GM23248 (cell line): ENCODE measurements at regions of chr10 and their contacts with region 1.

Region 1: GRCh38 chr10:48363617-48364355 is 57.3 kb downstream of the MAPK8 start:
- DNase-seq: peak; percentile 81
- H3K4me3 ChIP-seq: peak overlapping the region; percentile 32
- H3K27ac ChIP-seq: peak overlapping the region; percentile 45
- H3K4me1 ChIP-seq: peaks cover 33% of the 10 kb centered on the region
- H3K27me3 ChIP-seq: no peaks in the 10 kb centered on the region

Region 2: DNA sequence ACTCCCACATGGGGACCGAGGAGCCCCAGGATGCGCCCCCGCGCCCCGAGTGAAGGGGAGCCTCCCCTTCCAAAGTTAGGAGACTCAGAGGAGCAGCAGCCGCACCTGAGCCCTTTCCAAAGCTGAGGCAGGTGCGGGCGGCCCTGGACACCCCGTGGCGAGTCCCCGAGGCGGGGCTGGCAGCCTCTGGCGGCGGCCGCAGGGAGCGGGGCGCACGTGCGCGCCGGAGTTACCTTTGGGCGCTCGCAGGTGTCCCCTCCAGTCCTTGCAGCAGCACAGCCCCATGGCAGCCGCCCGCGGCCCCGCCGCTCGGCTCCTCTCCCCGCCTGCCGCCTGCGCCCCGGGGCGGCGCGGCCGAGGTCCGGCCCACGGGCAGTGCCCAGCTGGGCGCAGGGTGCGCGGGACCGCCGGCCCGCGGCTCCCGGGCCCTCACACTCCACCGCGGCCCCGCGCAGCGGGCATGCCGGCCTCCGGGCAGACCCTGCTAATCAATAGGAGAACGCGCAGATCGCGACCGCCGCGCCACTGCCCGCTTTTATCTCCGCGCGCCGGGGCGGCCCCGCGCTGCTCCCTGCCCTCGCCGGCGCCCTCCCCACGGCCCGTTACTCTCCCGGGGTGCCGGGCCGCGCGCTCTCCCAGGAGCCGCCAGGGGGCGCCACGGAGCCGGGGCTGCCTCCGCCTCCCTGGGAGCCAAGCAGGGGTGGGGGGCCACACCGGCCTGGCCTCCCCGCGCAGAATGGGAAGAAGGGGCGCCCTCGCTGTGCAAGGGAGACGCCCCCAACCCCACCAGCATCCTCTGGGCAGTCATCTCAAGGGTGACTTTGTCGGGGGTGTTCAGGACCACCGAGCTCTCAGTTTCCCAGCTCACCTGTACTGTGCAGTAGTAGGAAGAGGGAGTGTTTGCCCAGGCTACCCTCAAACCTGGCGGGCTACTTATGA is 160.3 kb after region 1 on chr10:
- in situ Hi-C with region 1: loop called (anchors 10 kb)
- DNase-seq: peak; percentile 58
- H3K4me3 ChIP-seq: peak overlapping the region; percentile 68
- H3K27ac ChIP-seq: no peak overlapping the region
- H3K4me1 ChIP-seq: peaks cover 39% of the 10 kb centered on the region
- H3K27me3 ChIP-seq: no peaks in the 10 kb centered on the region

Region 3: GRCh38 chr10:49177391-49178355 is 813.9 kb after region 1 on chr10:
- in situ Hi-C with region 1: no loop called
- DNase-seq: peak; percentile 97
- H3K4me3 ChIP-seq: no peak overlapping the region
- H3K27ac ChIP-seq: peak overlapping the region; percentile 86
- H3K4me1 ChIP-seq: peaks cover 13% of the 10 kb centered on the region
- H3K27me3 ChIP-seq: no peaks in the 10 kb centered on the region